ENCODE measurements at regions of chr3 and their contacts with region 1.

Region 1: GRCh38 chr3:173045770-173046382 is 95.2 kb downstream of the SPATA16 start:
- DNase-seq: no peak
- ATAC-seq: no peak
- H3K4me3 ChIP-seq: no peak overlapping the region
- H3K27ac ChIP-seq: no peak overlapping the region
- H3K4me1 ChIP-seq: no peaks in the 10 kb centered on the region
- H3K27me3 ChIP-seq: no peaks in the 10 kb centered on the region; a peak in 1 of 4 replicates
- CTCF ChIP-seq: peak in 1 of 3 experiments; percentile 4; a peak in 1 of 6 replicates
- EP300 ChIP-seq: no peak
- POLR2A ChIP-seq: no peak
- RAD21 ChIP-seq: no peak

Region 2: DNA sequence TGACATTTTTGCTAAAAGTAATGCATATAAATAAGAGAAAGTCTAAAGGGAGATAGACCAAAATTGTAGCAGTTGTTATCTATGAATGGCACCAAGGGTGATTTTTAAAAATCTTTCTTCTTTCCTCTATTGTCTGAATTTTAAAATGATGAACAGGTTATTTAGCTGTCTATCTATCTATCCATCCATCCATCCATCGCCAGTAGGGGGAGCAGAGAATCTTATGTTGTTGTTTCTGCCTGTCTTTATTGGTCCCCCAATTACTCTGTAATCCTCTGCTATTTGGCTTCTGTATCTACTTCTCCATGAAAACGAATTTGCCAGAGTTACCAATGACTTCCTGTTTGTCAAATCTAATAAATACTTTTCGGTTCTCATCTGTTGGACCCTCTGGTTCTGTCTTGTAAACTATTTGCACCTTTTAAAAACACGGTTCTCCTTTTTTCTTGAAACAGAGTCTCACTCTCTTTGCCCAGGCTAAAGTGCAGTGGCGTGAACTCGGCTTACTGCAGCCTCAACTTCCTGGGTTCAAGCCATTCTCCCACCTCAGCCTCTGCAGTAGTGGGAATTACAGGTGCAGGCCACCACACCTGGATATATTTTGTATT is 209.4 kb before region 1 on chr3:
- CTCF ChIA-PET with region 1: no interaction called
- POLR2A ChIA-PET with region 1: no interaction called
- RAD21 ChIA-PET with region 1: no interaction called
- SMC1A ChIA-PET with region 1: no interaction called
- in situ Hi-C with region 1: no loop called
- intact Hi-C with region 1: loop called (anchors 10 kb)
- DNase-seq: no peak
- ATAC-seq: peak; percentile 91
- H3K4me3 ChIP-seq: no peak overlapping the region
- H3K27ac ChIP-seq: no peak overlapping the region
- H3K4me1 ChIP-seq: no peaks in the 10 kb centered on the region
- H3K27me3 ChIP-seq: no peaks in the 10 kb centered on the region
- CTCF ChIP-seq: peak; percentile 50 to 62 (median 57)
- EP300 ChIP-seq: no peak
- POLR2A ChIP-seq: no peak
- RAD21 ChIP-seq: peak; percentile 53

Region 3: GRCh38 chr3:173140986-173141385 is 95.1 kb after region 1 on chr3 and contains the start of gene SPATA16:
- CTCF ChIA-PET with region 1: no interaction called
- POLR2A ChIA-PET with region 1: no interaction called
- RAD21 ChIA-PET with region 1: no interaction called
- SMC1A ChIA-PET with region 1: no interaction called
- in situ Hi-C with region 1: no loop called
- intact Hi-C with region 1: no loop called
- DNase-seq: no peak
- ATAC-seq: no peak
- H3K4me3 ChIP-seq: no peak within 1 kb of the TSS
- H3K27ac ChIP-seq: no peak within 1 kb of the TSS
- H3K4me1 ChIP-seq: no peaks in the 10 kb centered on the region
- H3K27me3 ChIP-seq: no peaks in the 10 kb centered on the region
- CTCF ChIP-seq: no peak
- EP300 ChIP-seq: no peak
- POLR2A ChIP-seq: no peak
- RAD21 ChIP-seq: no peak
- polyA plus RNA-seq, gene SPATA16: not detected